Left ventricle myocardium inferior (tissue), 1 donor: ENCODE measurements at regions of chr1 and their contacts with region 1.

Region 1: GRCh38 chr1:210143465-210144062 is 89.0 kb upstream of the SERTAD4 start:
- DNase-seq: peak; percentile 70
- H3K4me3 ChIP-seq: no peak overlapping the region
- H3K27ac ChIP-seq: no peak overlapping the region
- H3K4me1 ChIP-seq: no peaks in the 10 kb centered on the region
- H3K27me3 ChIP-seq: peaks cover 17% of the 10 kb centered on the region
- CTCF ChIP-seq: peak; percentile 75

Region 2: GRCh38 chr1:210311726-210312493 is 168.3 kb after region 1 on chr1:
- intact Hi-C with region 1: loop called (anchors 2 kb)
- DNase-seq: no peak
- H3K4me3 ChIP-seq: peak overlapping the region; percentile 62
- H3K27ac ChIP-seq: peak overlapping the region; percentile 81
- H3K4me1 ChIP-seq: peaks cover 19% of the 10 kb centered on the region
- H3K27me3 ChIP-seq: no peaks in the 10 kb centered on the region
- CTCF ChIP-seq: no peak

Region 3: GRCh38 chr1:210400043-210400840 is 256.7 kb after region 1 on chr1:
- intact Hi-C with region 1: loop called (anchors 5 kb)
- DNase-seq: peak; percentile 43
- H3K4me3 ChIP-seq: no peak overlapping the region
- H3K27ac ChIP-seq: no peak overlapping the region
- H3K4me1 ChIP-seq: peaks cover 8% of the 10 kb centered on the region
- H3K27me3 ChIP-seq: no peaks in the 10 kb centered on the region
- CTCF ChIP-seq: peak; percentile 89